AG04449 (cell line): ENCODE measurements at regions of chr19 and their contacts with region 1.

Region 1: DNA sequence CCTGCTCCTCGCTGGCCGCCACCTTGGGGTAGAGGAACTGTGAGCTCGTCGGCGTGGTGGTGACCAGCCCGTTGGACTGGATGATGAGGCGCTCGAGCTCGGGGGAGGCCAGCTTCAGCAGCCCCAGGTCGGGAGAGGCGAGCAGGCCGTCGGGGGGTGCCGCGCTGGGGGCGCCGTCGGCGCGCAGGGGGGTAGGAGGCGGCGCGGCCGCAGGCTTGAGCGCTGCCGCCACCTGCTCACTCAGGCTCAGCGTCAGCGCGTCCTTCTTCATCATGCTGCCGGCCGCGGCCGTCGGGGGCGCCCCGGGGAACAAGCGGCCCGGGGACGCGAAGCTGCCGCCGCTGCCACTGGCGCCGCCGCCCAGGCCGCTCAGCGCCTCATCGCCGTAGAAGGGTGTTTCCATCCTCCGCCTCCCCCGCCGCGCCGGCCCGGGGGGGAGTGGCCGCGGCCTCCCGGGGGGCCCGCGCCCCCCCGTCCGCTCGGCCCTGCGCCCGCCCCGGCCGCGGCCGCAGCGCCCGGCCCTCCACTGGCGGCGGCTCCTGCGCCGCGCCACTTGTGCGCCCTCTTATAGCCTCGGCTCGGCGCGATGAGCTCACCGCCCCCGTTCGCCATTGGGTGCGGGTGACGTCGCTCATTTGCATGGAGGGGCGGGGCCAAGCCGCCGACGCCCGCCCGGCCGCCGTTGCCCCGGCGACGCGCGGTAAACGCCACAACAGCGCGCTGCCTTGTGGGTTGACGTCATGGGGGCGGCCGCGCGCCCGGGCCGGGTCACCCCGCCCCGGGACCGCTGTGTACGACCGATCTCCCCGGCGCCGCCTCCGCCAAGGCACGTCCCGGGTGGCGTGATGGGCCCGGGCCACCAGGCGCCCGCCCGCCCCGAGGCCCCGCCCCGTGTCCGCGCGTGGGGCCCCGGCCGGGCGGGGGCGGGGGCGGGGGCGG is at the start of gene JUND:
- DNase-seq: peak; percentile 72
- H3K4me3 ChIP-seq: peak within 1 kb of the TSS; percentile 94
- CTCF ChIP-seq: no peak

Region 2: GRCh38 chr19:18203863-18204393 is 77.4 kb before region 1 on chr19 and contains the start of gene RAB3A:
- CTCF ChIA-PET with region 1: interaction called, 11 read pairs
- POLR2A ChIA-PET with region 1: interaction called, 26 read pairs
- DNase-seq: peak; percentile 99
- H3K4me3 ChIP-seq: peak within 1 kb of the TSS; percentile 96
- CTCF ChIP-seq: no peak

Region 3: DNA sequence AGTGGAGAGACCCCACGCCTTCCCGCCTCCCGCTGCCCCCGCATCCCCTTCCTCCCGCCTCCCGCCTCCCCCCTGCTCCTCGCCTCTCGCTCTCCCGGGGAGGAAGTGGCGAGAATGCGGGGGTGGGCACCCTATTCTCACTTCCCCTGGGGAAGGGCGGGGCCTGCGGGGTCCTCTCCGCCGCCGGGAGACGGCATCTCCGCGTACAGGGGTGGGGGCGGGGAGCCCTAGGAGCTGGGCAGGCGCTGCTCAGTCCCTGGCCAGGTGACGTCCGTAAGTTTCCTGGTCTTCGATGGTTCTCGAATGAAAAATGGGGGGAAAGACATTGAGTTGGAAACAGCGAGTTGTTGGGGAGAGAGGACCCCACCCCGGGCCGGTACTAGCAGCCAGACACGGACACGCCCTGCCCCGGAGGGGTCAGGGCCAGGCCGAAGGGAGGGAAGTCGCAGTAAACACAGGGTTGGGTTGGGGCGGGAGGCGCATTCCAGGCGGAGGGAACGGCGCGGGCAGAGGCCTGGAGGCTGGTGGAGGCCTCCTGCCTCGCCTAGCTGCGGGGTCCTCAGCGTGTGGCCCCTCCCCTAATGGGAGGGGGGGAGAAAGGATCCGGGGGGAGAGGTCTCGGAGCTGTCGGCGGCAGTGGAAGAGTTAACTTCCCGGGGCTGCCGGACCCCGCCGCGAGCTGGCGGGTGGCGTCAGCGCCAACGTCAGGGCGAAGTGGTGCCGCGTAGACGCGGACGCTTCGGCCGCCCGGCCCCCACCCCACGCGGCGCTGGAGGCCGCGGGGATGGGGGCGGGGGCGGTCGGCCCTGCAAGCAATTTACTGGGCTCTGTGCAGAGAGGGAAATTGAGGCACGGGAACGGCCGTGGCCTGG is 10.5 kb after region 1 on chr19:
- CTCF ChIA-PET with region 1: interaction called, 27 read pairs
- POLR2A ChIA-PET with region 1: interaction called, 113 read pairs
- DNase-seq: no peak
- H3K4me3 ChIP-seq: peak overlapping the region; percentile 61
- CTCF ChIP-seq: no peak

Region 4: DNA sequence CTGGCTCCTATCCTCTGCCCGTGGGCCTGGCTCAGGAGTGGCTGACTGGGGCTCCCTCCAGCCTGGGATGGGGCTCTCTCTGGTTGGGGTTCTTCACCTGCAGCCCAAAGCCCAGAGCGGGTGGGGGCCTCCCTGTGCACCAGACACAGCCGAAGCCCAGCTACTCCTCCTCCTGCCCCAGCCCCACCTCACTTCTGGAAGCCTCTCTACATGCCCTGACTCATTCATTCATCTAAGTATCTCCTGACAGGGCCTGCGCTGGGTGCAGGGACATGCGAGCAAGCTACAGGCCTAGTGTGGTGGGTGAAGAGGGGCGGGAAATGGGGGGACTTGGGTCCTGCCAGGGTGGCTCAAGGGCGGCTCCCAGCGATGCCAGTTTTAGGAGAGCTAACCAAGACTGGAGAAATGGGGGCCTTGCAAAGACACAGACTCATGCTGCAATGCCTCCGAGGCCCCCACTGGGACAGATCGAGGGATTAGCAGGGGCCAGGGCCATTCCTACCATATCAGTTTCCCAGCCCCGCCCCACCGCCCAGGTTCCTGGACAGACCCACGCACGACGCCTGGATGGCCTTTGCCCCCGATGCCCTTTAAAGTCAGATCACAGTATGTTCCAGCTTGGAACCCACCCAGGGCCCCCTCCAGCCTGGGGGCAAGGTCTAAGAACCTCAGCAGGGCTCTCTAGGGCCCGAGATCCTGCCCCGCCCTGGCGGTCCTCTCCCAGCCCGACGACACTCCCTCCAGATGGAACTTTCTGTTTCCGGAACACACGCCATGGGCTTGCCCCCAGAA is 29.0 kb after region 1 on chr19:
- CTCF ChIA-PET with region 1: interaction called, 65 read pairs
- POLR2A ChIA-PET with region 1: interaction called, 129 read pairs
- DNase-seq: no peak
- H3K4me3 ChIP-seq: no peak overlapping the region
- CTCF ChIP-seq: no peak

Region 5: GRCh38 chr19:18333662-18334389 is 52.5 kb after region 1 on chr19:
- CTCF ChIA-PET with region 1: interaction called, 321 read pairs
- POLR2A ChIA-PET with region 1: interaction called, 87 read pairs
- DNase-seq: no peak
- H3K4me3 ChIP-seq: no peak overlapping the region
- CTCF ChIP-seq: no peak

Region 6: DNA sequence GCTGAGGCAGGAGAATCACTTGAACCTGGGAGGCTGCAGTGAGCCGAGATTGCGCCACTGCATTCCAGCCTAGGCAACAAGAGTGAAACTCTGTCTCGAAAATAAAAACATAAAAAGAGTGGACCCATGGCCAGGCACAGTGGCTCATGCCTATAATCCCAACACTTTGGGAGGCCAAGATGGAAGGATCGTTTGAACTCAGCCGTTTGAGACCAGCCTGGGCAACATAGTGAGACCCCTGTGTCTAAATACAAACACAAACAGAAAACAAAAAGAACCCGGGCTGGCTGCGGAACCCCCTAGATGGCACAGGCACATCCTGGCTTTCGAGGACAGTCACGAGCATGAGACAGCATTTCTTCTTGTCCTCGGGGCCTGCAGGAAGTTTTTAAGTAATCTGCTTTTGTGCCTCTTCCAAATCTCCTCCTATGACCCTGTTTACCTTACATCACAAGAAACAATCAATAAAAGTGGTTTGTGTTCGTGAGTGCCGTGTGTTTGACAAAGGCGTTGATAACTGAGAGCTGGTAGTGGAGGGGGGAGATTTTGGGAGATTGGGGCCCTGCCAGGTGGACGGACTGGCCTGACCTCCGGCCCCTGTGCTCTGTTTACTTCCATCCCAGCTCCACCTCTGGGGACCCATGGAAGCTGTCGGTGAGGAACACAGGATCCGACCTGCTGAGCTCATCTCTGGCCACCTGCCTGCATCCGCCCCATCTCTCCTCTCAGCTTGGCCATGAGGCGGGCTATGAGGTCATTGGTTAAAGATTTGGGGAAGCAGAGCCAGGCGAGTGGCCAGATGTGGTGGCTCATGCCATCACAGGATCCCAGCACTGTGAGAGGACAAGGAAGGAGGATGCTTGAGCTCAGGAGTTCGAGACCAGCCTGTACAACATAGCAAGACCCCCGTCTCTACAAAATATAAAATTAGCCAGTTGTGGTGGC is 98.7 kb after region 1 on chr19:
- CTCF ChIA-PET with region 1: interaction called, 12 read pairs
- POLR2A ChIA-PET with region 1: interaction called, 6 read pairs
- DNase-seq: no peak
- H3K4me3 ChIP-seq: no peak overlapping the region
- CTCF ChIP-seq: no peak

Region 7: GRCh38 chr19:18419195-18419698 is 137.9 kb after region 1 on chr19 and contains the start of gene SSBP4:
- CTCF ChIA-PET with region 1: interaction called, 115 read pairs
- POLR2A ChIA-PET with region 1: interaction called, 42 read pairs
- DNase-seq: no peak
- H3K4me3 ChIP-seq: peak within 1 kb of the TSS; percentile 73
- CTCF ChIP-seq: peak; percentile 24